A673 (cell line): ENCODE measurements at regions of chr19 and their contacts with region 1.

Region 1: DNA sequence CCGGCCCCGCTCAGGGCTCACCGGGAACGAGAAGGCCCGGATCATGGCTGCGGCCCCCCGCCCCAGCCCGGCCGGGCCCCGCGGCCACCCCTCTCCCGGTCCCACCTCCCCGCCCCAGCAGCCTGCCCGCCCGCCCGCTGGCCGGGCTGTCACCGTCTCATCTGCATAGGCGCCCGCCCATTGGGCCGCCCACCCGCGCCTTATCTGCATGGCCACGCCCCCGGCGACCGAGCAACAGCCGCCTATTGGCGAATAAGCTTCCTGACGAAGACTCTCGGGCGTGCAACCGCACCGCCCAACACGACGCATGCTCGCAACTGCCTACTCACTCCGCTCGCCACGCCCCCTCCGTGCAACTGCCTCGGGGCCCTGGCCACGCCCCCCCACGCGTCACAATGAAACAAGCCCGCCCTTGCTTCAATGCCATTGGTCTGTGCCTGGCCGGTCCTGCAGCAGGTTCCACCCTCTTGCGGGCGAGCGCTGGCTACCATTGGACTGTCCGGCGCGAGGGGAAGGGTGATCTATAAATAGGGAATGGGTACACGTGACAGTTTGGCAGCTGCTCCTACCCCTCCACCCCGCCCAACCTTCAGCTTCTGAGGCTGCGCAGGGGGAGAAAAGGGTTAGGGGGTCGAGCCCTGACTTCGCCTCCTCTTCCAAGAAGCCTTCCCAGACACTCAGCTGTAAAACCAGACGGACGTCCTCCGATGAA is at the start of gene DACT3:
- DNase-seq: peak; percentile 100
- H3K4me3 ChIP-seq: peak within 1 kb of the TSS; percentile 46
- H3K27ac ChIP-seq: no peak within 1 kb of the TSS
- H3K4me1 ChIP-seq: peaks cover 15% of the 10 kb centered on the region
- H3K27me3 ChIP-seq: no peaks in the 10 kb centered on the region
- CTCF ChIP-seq: no peak
- total RNA-seq, gene DACT3: 0.32 and 1.1 TPM in 2 replicates

Region 2: DNA sequence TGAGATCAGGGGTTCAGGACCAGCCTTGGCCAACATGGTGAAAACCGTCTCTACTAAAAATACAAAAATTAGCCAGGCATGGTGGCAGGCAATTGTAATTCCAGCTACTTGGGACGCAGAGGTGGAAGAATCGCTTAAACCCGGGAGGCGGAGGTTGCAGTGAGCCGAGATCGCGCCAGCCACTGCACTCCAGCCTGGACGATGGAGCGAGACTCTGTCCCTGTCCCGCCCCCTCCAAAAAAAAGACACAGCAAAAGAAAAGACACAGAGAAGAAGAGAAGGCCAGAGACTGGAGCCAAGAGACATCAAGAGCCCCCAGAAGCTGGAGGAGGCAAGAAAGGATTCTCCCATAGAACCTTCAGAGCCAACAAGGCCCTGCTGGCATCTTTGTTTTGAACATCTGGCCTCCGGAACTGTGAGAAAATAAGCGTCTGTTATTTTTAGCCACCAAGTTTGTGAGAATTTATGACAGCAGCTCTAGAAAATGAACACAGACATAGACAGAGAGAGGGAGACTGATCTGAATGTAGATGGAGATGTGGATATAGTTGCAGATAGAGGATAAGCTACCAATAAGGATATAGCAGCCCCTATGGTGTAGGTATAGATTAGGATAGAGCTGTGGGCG is 139.8 kb before region 1 on chr19:
- CTCF ChIA-PET with region 1: no interaction called
- POLR2A ChIA-PET with region 1: interaction called, 11 read pairs
- intact Hi-C with region 1: no loop called
- DNase-seq: no peak
- H3K4me3 ChIP-seq: no peak overlapping the region
- H3K27ac ChIP-seq: no peak overlapping the region
- H3K4me1 ChIP-seq: no peaks in the 10 kb centered on the region
- H3K27me3 ChIP-seq: no peaks in the 10 kb centered on the region
- CTCF ChIP-seq: no peak

Region 3: GRCh38 chr19:46529622-46530462 is 131.3 kb before region 1 on chr19:
- CTCF ChIA-PET with region 1: interaction called, 17 read pairs
- POLR2A ChIA-PET with region 1: no interaction called
- intact Hi-C with region 1: loop called (anchors 2 kb)
- DNase-seq: peak; percentile 76
- H3K4me3 ChIP-seq: no peak overlapping the region
- H3K27ac ChIP-seq: no peak overlapping the region
- H3K4me1 ChIP-seq: peaks cover 10% of the 10 kb centered on the region
- H3K27me3 ChIP-seq: no peaks in the 10 kb centered on the region
- CTCF ChIP-seq: peak; percentile 93

Region 4: GRCh38 chr19:46614114-46614722 is 47.0 kb before region 1 on chr19:
- CTCF ChIA-PET with region 1: interaction called, 35 read pairs
- POLR2A ChIA-PET with region 1: no interaction called
- intact Hi-C with region 1: loop called (anchors 1 kb)
- DNase-seq: peak; percentile 88
- H3K4me3 ChIP-seq: no peak overlapping the region
- H3K27ac ChIP-seq: no peak overlapping the region
- H3K4me1 ChIP-seq: peaks cover 7% of the 10 kb centered on the region
- H3K27me3 ChIP-seq: no peaks in the 10 kb centered on the region
- CTCF ChIP-seq: peak; percentile 92

Region 5: DNA sequence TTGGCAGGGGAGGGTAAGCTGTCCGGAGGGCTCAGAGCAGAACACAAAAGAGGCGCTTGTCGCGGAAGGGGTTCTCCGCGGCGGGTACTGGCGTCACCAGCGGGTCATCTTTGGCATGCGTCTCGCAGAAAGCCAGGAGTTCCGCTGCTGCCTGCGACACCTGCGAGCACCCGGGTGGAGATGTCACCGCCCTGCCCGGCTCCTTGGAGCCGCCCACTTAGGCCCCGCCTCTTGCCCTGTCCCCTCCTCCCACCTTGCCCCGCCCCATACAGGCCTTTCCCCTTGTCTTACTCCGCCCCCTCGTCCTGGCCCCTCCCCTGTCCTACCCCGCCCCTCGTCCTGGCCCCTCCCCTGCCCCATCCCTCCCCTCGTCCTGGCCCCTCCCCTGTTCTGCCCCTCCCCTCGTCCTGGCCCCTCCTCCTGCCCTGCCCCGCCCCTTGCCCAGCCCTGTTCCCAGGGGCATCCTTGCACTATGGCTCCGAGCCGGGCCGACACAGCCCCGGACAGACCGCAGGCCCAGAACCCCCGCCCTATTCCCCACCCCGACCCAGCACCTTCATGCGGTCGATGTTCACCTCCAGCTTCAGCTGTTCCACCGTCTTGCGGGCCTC is 27.0 kb before region 1 on chr19:
- CTCF ChIA-PET with region 1: interaction called, 14 read pairs
- POLR2A ChIA-PET with region 1: no interaction called
- intact Hi-C with region 1: loop called (anchors 2 kb)
- DNase-seq: peak; percentile 86
- H3K4me3 ChIP-seq: peak overlapping the region; percentile 48
- H3K27ac ChIP-seq: no peak overlapping the region
- H3K4me1 ChIP-seq: peaks cover 33% of the 10 kb centered on the region
- H3K27me3 ChIP-seq: no peaks in the 10 kb centered on the region
- CTCF ChIP-seq: no peak